Heart right ventricle (tissue), 16 donors: ENCODE measurements at regions of chr5 and their contacts with region 1.

Region 1: GRCh38 chr5:77030097-77031071 is at the start of gene AGGF1:
- DNase-seq: peak; percentile 92 to 95
- ATAC-seq: peak; percentile 100
- H3K4me3 ChIP-seq: peak within 1 kb of the TSS; percentile 50 to 99 (median 85)
- H3K27ac ChIP-seq: peak within 1 kb of the TSS; percentile 57 to 98 (median 92)
- H3K4me1 ChIP-seq: peaks cover 0 to 31% (median 19%) of the 10 kb centered on the region in 9 donors
- H3K27me3 ChIP-seq: no peaks in the 10 kb centered on the region
- CTCF ChIP-seq: no peak
- total RNA-seq, gene AGGF1: 12.6 to 20.6 (median 16.2) TPM

Region 2: DNA sequence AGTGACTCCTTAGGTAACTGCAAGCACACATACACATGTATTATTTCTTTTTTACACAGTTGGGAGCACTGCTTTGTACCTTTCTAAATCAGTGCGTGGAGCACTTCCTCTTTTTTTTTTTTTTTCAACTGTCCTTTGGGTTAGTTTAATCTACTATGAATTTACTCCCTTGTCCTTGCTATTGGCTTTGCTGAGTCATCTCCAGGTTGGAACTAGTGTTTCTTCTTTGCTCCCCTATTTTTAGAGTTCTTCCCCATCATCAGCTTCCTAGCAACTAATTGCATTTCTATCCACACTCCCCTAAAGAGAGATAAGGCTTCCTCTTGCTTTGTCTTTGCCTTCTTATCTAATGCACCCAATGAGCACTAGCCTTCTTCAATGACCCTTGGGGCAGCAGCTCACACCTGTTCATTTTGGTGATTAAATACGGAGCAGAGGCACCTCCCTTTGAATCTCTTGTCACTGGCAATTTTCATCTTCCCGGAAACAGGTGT is 156.2 kb before region 1 on chr5:
- intact Hi-C with region 1: loop called in 2 of 10 experiments (anchors 5 to 10 kb)
- DNase-seq: no peak
- ATAC-seq: no peak
- H3K4me3 ChIP-seq: no peak overlapping the region
- H3K27ac ChIP-seq: no peak overlapping the region
- H3K4me1 ChIP-seq: peaks cover 0 to 12% (median 6%) of the 10 kb centered on the region in 9 donors
- H3K27me3 ChIP-seq: no peaks in the 10 kb centered on the region
- CTCF ChIP-seq: no peak

Region 3: GRCh38 chr5:77086689-77087483 is 56.5 kb after region 1 on chr5 and contains the start of gene ZBED3:
- intact Hi-C with region 1: loop called in 1 of 10 experiments (anchors 5 kb)
- DNase-seq: peak; percentile 63 to 64
- ATAC-seq: peak; percentile 76 to 88 (median 81)
- H3K4me3 ChIP-seq: peak within 1 kb of the TSS; percentile 66 to 98 (median 82)
- H3K27ac ChIP-seq: peak within 1 kb of the TSS; percentile 86 to 98 (median 90)
- H3K4me1 ChIP-seq: peaks cover 2 to 21% (median 16%) of the 10 kb centered on the region in 9 donors
- H3K27me3 ChIP-seq: no peaks in the 10 kb centered on the region
- CTCF ChIP-seq: peak in 5 of 9 donors; percentile 5 to 30 (median 21)
- total RNA-seq, gene ZBED3: 4.8 to 8.9 (median 6.5) TPM